Activated CD8-positive, alpha-beta T cell treated with anti-CD3 and anti-CD28 coated beads for 36 hours (primary cell): ENCODE measurements at regions of chr1 and their contacts with region 1.

Region 1: DNA sequence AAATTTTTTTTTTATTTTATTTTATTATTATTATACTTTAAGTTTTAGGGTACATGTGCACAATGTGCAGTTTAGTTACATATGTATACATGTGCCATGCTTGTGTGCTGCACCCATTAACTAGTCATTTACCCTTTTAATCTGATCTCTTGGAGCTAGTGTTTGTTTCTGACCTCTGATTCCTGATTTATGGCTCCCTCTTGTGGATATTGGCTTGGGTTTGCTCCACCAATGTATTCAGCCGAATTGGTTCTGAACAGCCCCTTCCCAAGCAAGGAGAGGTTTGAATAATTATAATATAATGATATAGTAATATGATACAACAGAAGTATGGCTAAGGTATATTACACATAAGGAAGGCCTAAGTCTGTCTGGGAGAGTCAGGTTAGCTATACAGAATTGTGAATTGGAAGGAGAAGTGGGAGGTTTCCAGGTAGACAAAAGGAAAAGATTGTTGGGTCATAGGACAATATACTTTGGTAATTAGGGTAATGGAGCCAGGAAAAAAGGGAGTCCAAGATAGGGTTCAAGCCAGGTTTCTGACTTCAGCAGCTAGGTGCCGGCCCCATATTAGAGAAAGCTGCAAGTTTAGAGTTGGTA is 53.1 kb upstream of the HMCN1 start:
- DNase-seq: peak; percentile 22
- ATAC-seq: peak; percentile 71
- H3K4me3 Mint-ChIP-seq: no peak overlapping the region
- H3K27ac Mint-ChIP-seq: no peak overlapping the region
- H3K4me1 Mint-ChIP-seq: peaks cover 21% of the 10 kb centered on the region
- H3K27me3 Mint-ChIP-seq: no peaks in the 10 kb centered on the region
- CTCF ChIP-seq: peak; percentile 68

Region 2: GRCh38 chr1:185238447-185238846 is 442.7 kb before region 1 on chr1:
- CTCF ChIA-PET with region 1: interaction called, 19 read pairs
- POLR2A ChIA-PET with region 1: no interaction called
- intact Hi-C with region 1: loop called (anchors 10 kb)
- DNase-seq: no peak
- ATAC-seq: peak; percentile 64
- H3K4me3 Mint-ChIP-seq: no peak overlapping the region
- H3K27ac Mint-ChIP-seq: no peak overlapping the region
- H3K4me1 Mint-ChIP-seq: peaks cover 26% of the 10 kb centered on the region
- H3K27me3 Mint-ChIP-seq: no peaks in the 10 kb centered on the region
- CTCF ChIP-seq: peak; percentile 48

Region 3: GRCh38 chr1:185559684-185560331 is 121.3 kb before region 1 on chr1:
- CTCF ChIA-PET with region 1: interaction called, 10 read pairs
- POLR2A ChIA-PET with region 1: no interaction called
- intact Hi-C with region 1: loop called (anchors 10 kb)
- DNase-seq: peak; percentile 81
- ATAC-seq: peak; percentile 94
- H3K4me3 Mint-ChIP-seq: no peak overlapping the region
- H3K27ac Mint-ChIP-seq: peak overlapping the region; percentile 83
- H3K4me1 Mint-ChIP-seq: peaks cover 36% of the 10 kb centered on the region
- H3K27me3 Mint-ChIP-seq: no peaks in the 10 kb centered on the region
- CTCF ChIP-seq: peak; percentile 39

Region 4: DNA sequence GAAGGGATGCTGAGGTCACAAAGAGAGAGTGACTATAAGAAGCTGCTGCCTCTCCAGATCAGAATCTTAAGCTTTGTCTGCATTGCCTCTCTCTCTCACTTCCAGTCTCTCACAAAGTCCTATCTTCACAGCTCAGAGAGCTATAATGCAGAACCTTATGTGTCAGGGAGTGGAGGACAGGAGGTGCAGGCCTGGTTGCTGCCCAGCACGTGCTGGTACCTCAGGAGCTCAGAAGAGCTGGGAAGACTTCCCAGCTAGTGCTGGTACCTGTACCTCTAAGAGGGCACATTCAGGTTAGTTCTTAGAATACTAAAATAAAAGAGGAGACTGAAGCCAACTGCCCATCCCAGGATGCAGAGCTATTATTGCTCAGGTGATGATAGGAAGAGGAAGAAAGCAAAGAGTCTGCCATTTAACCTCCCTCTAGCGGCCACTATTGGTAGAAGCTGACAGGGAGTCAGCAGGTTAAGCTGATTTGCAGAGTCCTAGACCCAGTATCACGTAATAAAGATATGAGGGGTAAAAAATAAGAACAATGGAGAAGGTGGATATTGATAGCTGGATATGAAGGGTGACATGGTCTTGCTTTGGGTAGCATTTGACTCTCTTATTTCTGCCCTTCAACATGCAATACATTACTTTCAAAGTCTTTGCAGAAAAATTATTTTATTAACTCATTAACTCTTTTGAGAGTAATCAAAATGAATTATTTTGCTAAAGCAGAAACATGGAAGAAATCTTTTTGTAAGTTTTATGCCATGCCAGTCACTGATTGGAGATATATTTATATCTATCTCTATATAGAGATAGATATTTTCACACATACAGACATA is 85.1 kb before region 1 on chr1:
- CTCF ChIA-PET with region 1: interaction called, 18 read pairs
- POLR2A ChIA-PET with region 1: no interaction called
- intact Hi-C with region 1: no loop called
- DNase-seq: peak; percentile 64
- ATAC-seq: peak; percentile 82
- H3K4me3 Mint-ChIP-seq: no peak overlapping the region
- H3K27ac Mint-ChIP-seq: no peak overlapping the region
- H3K4me1 Mint-ChIP-seq: peaks cover 14% of the 10 kb centered on the region
- H3K27me3 Mint-ChIP-seq: no peaks in the 10 kb centered on the region
- CTCF ChIP-seq: peak; percentile 54

Region 5: GRCh38 chr1:185652348-185652747 is 28.8 kb before region 1 on chr1:
- CTCF ChIA-PET with region 1: interaction called, 18 read pairs
- POLR2A ChIA-PET with region 1: no interaction called
- intact Hi-C with region 1: no loop called
- DNase-seq: peak; percentile 15
- ATAC-seq: no peak
- H3K4me3 Mint-ChIP-seq: no peak overlapping the region
- H3K27ac Mint-ChIP-seq: no peak overlapping the region
- H3K4me1 Mint-ChIP-seq: peaks cover 9% of the 10 kb centered on the region
- H3K27me3 Mint-ChIP-seq: no peaks in the 10 kb centered on the region
- CTCF ChIP-seq: peak; percentile 2

Region 6: DNA sequence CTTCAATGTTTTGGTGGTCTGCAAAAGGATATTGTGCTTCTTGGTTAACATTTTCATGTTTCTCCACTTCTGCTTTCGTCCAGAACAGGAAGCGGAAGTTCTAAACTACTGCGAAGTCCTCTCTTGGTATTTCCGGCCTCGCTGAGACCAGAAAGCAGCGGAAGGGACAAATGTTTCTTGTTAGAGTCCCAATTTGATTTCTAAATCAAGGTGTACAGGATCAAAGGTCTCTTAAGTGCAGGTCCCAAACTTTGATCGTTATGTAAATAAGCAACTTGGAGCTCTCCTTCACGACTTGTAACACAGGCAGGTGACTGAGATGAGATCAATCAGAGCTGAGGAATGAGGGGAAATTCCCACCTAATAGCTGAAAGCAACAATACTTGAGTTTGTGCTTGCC is 12.9 kb after region 1 on chr1:
- CTCF ChIA-PET with region 1: interaction called, 15 read pairs
- POLR2A ChIA-PET with region 1: no interaction called
- intact Hi-C with region 1: no loop called
- DNase-seq: peak; percentile 55
- ATAC-seq: peak; percentile 73
- H3K4me3 Mint-ChIP-seq: peak overlapping the region; percentile 71
- H3K27ac Mint-ChIP-seq: peak overlapping the region; percentile 91
- H3K4me1 Mint-ChIP-seq: peaks cover 14% of the 10 kb centered on the region
- H3K27me3 Mint-ChIP-seq: peaks cover 3% of the 10 kb centered on the region
- CTCF ChIP-seq: no peak

Region 7: GRCh38 chr1:185720633-185721272 is 39.6 kb after region 1 on chr1:
- CTCF ChIA-PET with region 1: no interaction called
- POLR2A ChIA-PET with region 1: no interaction called
- intact Hi-C with region 1: no loop called
- DNase-seq: no peak
- ATAC-seq: no peak
- H3K4me3 Mint-ChIP-seq: no peak overlapping the region
- H3K27ac Mint-ChIP-seq: no peak overlapping the region
- H3K4me1 Mint-ChIP-seq: no peaks in the 10 kb centered on the region
- H3K27me3 Mint-ChIP-seq: peaks cover 6% of the 10 kb centered on the region
- CTCF ChIP-seq: peak; percentile 58

Region 8: DNA sequence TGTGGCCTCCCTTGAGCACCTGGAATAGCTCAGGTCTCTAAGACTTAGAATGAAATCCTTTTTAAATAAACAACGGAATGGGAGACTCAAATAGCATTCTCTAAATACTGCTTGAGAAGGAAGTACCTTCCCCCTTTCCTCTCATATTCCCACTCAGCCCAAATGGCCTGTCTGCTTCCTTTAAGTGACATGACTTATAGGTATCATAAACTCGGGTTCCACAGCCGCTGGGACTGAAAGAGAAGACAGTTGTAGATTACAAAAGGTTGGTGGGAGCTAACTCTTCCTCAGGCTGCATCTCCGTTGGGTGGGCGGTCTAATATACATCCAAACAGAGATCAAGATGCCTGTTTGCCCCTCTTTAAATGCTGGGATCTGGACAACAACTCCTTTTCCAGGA is 51.8 kb after region 1 on chr1:
- CTCF ChIA-PET with region 1: no interaction called
- POLR2A ChIA-PET with region 1: no interaction called
- intact Hi-C with region 1: no loop called
- DNase-seq: no peak
- ATAC-seq: no peak
- H3K4me3 Mint-ChIP-seq: no peak overlapping the region
- H3K27ac Mint-ChIP-seq: no peak overlapping the region
- H3K4me1 Mint-ChIP-seq: peaks cover 13% of the 10 kb centered on the region
- H3K27me3 Mint-ChIP-seq: peaks cover 35% of the 10 kb centered on the region
- CTCF ChIP-seq: no peak